ENCODE measurements at regions of chr5 and their contacts with region 1.

Region 1: DNA sequence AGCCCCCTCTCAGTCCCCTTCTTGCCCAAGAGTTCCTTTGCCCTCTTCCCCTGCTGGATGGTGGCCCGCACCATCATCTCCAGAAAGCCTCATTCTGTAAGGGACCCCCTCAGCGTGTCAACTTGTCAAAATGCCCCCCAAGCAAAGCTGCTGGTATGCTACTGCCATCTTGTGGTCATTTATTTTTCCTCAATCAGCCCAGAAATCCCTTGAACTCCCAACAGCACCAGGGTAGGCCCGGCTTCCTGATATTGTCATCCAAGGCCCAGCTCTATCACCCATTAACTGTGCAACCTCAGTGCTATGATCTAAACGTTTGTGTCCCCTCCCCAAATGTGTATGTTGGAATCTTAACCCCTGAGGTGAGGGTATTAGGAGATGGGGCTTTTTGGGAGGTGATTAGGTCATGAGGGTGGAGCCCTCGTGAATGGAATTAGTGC is 53.2 kb upstream of the FBXW11 start:
- DNase-seq: peak in 1 of 5 donors; percentile 25
- H3K4me3 ChIP-seq: no peak overlapping the region
- H3K4me3 Mint-ChIP-seq: no peak overlapping the region
- H3K27ac ChIP-seq: no peak overlapping the region
- H3K27ac Mint-ChIP-seq: peak overlapping the region; percentile 6 to 89 (median 73)
- H3K4me1 ChIP-seq: peaks cover 11% of the 10 kb centered on the region
- H3K4me1 Mint-ChIP-seq: peaks cover 13 to 30% (median 17%) of the 10 kb centered on the region in 4 donors
- H3K27me3 ChIP-seq: no peaks in the 10 kb centered on the region
- H3K27me3 Mint-ChIP-seq: no peaks in the 10 kb centered on the region

Region 2: GRCh38 chr5:172071289-172071875 is 11.7 kb after region 1 on chr5:
- CTCF ChIA-PET with region 1: interaction called, 31 read pairs
- POLR2A ChIA-PET with region 1: interaction called, 12 read pairs
- intact Hi-C with region 1: no loop called
- DNase-seq: no peak
- H3K4me3 ChIP-seq: no peak overlapping the region
- H3K4me3 Mint-ChIP-seq: peak overlapping the region in 6 of 8 donors; percentile 8 to 62 (median 32)
- H3K27ac ChIP-seq: no peak overlapping the region
- H3K27ac Mint-ChIP-seq: peak overlapping the region; percentile 1 to 95 (median 29)
- H3K4me1 ChIP-seq: peaks cover 60% of the 10 kb centered on the region
- H3K4me1 Mint-ChIP-seq: peaks cover 39 to 65% (median 50%) of the 10 kb centered on the region in 4 donors
- H3K27me3 ChIP-seq: no peaks in the 10 kb centered on the region
- H3K27me3 Mint-ChIP-seq: no peaks in the 10 kb centered on the region

Region 3: DNA sequence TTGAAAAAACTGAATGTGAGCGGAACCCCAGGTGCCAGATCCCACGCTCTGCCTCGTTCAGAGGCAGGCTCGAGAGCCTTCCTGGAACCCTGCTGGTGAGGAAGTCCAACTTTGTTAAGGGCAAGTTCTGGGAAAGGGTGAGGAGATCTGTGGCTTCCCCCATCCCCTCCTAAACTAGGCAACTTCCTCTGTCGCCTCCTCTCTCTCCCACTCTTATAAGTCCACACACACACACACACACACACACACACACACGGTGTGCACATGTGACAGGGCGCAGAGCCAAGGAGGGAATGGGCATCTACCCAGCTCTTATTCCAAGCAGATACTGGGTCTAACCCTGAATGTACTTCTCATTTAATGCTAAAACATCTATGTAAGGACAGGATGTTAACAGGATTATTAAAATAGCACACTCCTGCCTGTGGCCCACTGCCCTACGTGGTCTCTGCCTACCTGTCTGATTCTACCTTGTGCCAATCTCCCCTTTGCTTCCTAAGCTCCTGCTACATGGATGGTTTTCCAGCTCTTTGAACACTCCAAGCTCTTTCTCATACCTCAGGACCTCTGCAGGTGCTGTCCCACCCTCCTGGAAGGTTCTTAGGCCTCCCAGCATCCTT is 19.2 kb after region 1 on chr5:
- CTCF ChIA-PET with region 1: interaction called, 12 read pairs
- POLR2A ChIA-PET with region 1: no interaction called
- intact Hi-C with region 1: no loop called
- DNase-seq: no peak
- H3K4me3 ChIP-seq: no peak overlapping the region
- H3K4me3 Mint-ChIP-seq: peak overlapping the region in 3 of 8 donors; percentile 32 to 62 (median 52)
- H3K27ac ChIP-seq: no peak overlapping the region
- H3K27ac Mint-ChIP-seq: peak overlapping the region; percentile 38 to 95 (median 73)
- H3K4me1 ChIP-seq: peaks cover 11% of the 10 kb centered on the region
- H3K4me1 Mint-ChIP-seq: peaks cover 7 to 29% (median 12%) of the 10 kb centered on the region in 4 donors
- H3K27me3 ChIP-seq: no peaks in the 10 kb centered on the region
- H3K27me3 Mint-ChIP-seq: no peaks in the 10 kb centered on the region

Region 4: GRCh38 chr5:172714491-172715421 is 655.1 kb after region 1 on chr5:
- CTCF ChIA-PET with region 1: no interaction called
- POLR2A ChIA-PET with region 1: no interaction called
- intact Hi-C with region 1: no loop called
- DNase-seq: peak; percentile 58 to 69 (median 61)
- H3K4me3 ChIP-seq: no peak overlapping the region
- H3K4me3 Mint-ChIP-seq: no peak overlapping the region
- H3K27ac ChIP-seq: no peak overlapping the region
- H3K27ac Mint-ChIP-seq: peak overlapping the region in 5 of 7 donors; percentile 0 to 62 (median 41)
- H3K4me1 ChIP-seq: peaks cover 11% of the 10 kb centered on the region
- H3K4me1 Mint-ChIP-seq: peaks cover 15 to 22% (median 17%) of the 10 kb centered on the region in 4 donors
- H3K27me3 ChIP-seq: no peaks in the 10 kb centered on the region
- H3K27me3 Mint-ChIP-seq: peaks cover 9 to 13% of the 10 kb centered on the region in 2 donors

Measured in CD4-positive, alpha-beta memory T cell (primary cell).